Right lobe of liver (tissue), 6 donors: ENCODE measurements at regions of chr4 and their contacts with region 1.

Region 1: DNA sequence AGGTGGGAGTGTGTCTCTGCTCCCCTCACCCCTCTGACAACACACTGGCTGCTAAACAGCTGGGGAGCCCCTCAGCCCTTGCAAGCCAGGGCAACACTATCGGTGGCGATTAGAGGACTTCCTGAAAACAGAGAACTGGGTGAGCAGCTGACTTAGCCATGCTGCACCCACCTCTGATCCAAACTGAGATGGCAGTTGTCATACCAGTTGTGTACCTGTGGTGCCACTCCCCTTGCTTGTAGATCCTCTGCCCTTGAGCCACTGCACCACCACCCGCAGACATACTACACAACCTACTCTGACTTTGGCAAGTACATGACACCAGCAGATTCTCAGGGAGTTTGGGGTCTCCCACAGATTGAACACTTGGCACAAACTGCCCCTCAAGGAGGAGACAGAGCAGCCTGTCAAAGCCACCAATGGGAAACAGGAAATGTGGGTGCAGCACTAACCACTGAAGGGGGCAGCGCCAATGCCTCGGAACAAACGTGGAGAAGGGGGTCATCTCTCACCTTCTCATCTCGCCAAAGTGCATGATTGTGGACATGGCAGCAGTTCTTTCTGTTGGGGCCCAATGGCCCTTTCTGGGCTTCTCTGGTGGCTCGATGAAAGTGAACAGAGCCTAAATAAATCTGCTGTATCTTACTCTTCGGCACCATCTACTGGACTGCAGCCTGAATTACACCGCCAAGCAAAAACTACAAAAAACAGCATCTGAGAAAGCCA is 119.8 kb downstream of the NEK1 start:
- DNase-seq: no peak
- ATAC-seq: peak; percentile 84 to 91 (median 88)
- H3K4me3 ChIP-seq: no peak overlapping the region
- H3K27ac ChIP-seq: no peak overlapping the region
- H3K4me1 ChIP-seq: no peaks in the 10 kb centered on the region
- H3K27me3 ChIP-seq: no peaks in the 10 kb centered on the region
- CTCF ChIP-seq: peak; percentile 56 to 82 (median 68)
- POLR2A ChIP-seq: no peak

Region 2: DNA sequence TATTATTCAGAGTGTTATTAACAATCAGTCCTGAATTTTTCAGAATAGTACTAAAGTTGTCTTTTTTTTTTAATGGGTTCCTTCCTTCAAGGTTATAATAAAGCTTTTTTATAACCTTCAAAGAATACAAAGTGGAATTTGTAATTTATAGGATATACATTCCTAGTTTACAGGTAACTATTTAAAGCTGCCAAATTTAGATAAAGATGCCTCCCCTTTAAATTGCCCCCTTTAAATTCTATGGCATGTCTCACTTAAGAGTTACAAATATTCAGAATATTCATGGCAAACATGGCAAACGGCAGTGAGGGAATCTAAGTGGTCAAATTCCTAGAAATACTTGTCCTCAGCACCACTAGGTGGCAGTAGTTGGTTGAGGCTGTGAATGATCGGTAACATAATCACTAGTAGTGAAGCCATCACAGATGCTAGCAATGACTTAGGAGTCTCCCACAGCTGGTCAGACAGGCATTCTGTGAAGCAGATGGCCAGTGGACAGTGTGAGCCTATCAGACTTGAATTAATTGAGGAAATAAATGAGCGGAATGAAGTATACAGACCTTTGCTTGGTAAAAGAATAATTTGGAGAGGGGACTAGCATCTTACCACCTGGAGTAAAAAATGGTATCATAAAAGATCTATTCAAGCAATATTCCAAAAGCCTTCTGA is 568.9 kb before region 1 on chr4:
- intact Hi-C with region 1: loop called in 1 of 2 experiments (anchors 10 kb)
- DNase-seq: peak in 1 of 3 donors; percentile 73
- ATAC-seq: peak; percentile 65 to 89 (median 80)
- H3K4me3 ChIP-seq: no peak overlapping the region
- H3K27ac ChIP-seq: no peak overlapping the region
- H3K4me1 ChIP-seq: peaks cover 0 to 23% (median 9%) of the 10 kb centered on the region in 4 donors
- H3K27me3 ChIP-seq: no peaks in the 10 kb centered on the region
- CTCF ChIP-seq: peak; percentile 72 to 84 (median 78)
- POLR2A ChIP-seq: no peak